ENCODE measurements at regions of chr3 and their contacts with region 1.

Region 1: GRCh38 chr3:12663936-12664908 is at the start of gene RAF1:
- DNase-seq: peak; percentile 96 to 99 (median 97)
- ATAC-seq: peak; percentile 92
- H3K4me3 ChIP-seq: peak within 1 kb of the TSS; percentile 83
- H3K4me3 Mint-ChIP-seq: peak within 1 kb of the TSS; percentile 100
- H3K27ac ChIP-seq: peak within 1 kb of the TSS; percentile 94 to 99
- H3K27ac Mint-ChIP-seq: peak within 1 kb of the TSS; percentile 94
- H3K4me1 ChIP-seq: peaks cover 32% of the 10 kb centered on the region
- H3K4me1 Mint-ChIP-seq: peaks cover 44% of the 10 kb centered on the region
- H3K27me3 ChIP-seq: no peaks in the 10 kb centered on the region
- H3K27me3 Mint-ChIP-seq: no peaks in the 10 kb centered on the region
- CTCF ChIP-seq: no peak
- total RNA-seq, gene RAF1: 127 to 139 TPM

Region 2: DNA sequence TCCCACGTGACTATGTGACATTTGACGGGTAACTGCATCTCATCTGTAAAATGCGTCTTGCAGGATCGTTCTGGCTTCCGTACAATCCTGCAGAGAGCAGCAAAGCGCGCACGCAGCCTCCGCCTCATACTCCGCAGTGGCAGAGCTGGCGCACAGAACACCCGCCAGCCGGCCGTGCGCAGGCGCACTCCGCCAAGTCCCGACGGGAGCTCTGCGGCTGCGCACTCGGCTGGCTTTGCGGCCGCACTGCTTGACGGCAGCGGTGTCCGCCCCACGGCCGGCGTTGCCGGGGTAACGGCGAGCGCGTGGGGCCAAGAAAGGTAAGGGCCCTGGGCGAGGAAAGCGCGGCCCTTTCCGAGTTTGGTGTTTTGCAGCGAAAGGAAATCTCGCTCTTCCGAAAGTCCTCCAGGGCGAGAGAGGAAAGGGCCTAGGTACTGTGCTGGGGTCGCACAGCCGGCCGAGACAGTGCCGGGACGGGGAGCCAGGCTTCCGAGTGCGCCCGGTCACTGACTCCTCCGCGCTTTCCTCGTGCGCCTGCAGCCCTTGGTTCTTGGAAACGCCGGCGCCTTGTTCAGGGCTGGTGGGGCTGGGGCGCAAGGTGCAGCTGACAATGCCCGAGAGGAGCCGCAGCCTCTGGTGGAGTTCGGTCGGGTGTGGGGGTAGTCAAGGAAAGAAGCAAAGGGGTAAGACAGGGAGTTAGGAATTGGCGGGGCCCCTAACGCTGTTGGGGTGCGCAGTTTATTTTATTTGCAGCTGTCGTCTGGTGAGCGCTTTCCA is 179.8 kb before region 1 on chr3 and contains the start of gene TSEN2:
- CTCF ChIA-PET with region 1: interaction called, 3 read pairs
- POLR2A ChIA-PET with region 1: interaction called, 22 read pairs
- intact Hi-C with region 1: loop called in 1 of 2 experiments (anchors 5 kb)
- DNase-seq: peak; percentile 92 to 99 (median 96)
- ATAC-seq: peak; percentile 96
- H3K4me3 ChIP-seq: peak within 1 kb of the TSS; percentile 87
- H3K4me3 Mint-ChIP-seq: peak within 1 kb of the TSS; percentile 97
- H3K27ac ChIP-seq: peak within 1 kb of the TSS; percentile 72 to 81
- H3K27ac Mint-ChIP-seq: peak within 1 kb of the TSS; percentile 97
- H3K4me1 ChIP-seq: peaks cover 29% of the 10 kb centered on the region
- H3K4me1 Mint-ChIP-seq: peaks cover 52% of the 10 kb centered on the region
- H3K27me3 ChIP-seq: no peaks in the 10 kb centered on the region
- H3K27me3 Mint-ChIP-seq: no peaks in the 10 kb centered on the region
- CTCF ChIP-seq: no peak
- total RNA-seq, gene TSEN2: 8.0 to 8.2 TPM

Region 3: GRCh38 chr3:12556671-12557472 is 107.3 kb before region 1 on chr3 and contains the start of gene MKRN2:
- CTCF ChIA-PET with region 1: no interaction called
- POLR2A ChIA-PET with region 1: interaction called, 19 read pairs
- intact Hi-C with region 1: loop called (anchors 1 to 5 kb)
- DNase-seq: peak; percentile 68 to 93 (median 82)
- ATAC-seq: peak; percentile 93
- H3K4me3 ChIP-seq: peak within 1 kb of the TSS; percentile 85
- H3K4me3 Mint-ChIP-seq: peak within 1 kb of the TSS; percentile 93
- H3K27ac ChIP-seq: peak within 1 kb of the TSS; percentile 85 to 91
- H3K27ac Mint-ChIP-seq: peak within 1 kb of the TSS; percentile 81
- H3K4me1 ChIP-seq: peaks cover 44% of the 10 kb centered on the region
- H3K4me1 Mint-ChIP-seq: peaks cover 69% of the 10 kb centered on the region
- H3K27me3 ChIP-seq: peaks cover 17 to 27% of the 10 kb centered on the region in 2 experiments
- H3K27me3 Mint-ChIP-seq: peaks cover 38% of the 10 kb centered on the region
- CTCF ChIP-seq: no peak
- total RNA-seq, gene MKRN2: 19.0 to 20.3 TPM

Region 4: GRCh38 chr3:12629560-12629959 is 34.7 kb before region 1 on chr3:
- CTCF ChIA-PET with region 1: no interaction called
- POLR2A ChIA-PET with region 1: interaction called, 4 read pairs
- intact Hi-C with region 1: loop called in 1 of 2 experiments (anchors 5 kb)
- DNase-seq: no peak
- ATAC-seq: no peak
- H3K4me3 ChIP-seq: no peak overlapping the region
- H3K4me3 Mint-ChIP-seq: no peak overlapping the region
- H3K27ac ChIP-seq: no peak overlapping the region
- H3K27ac Mint-ChIP-seq: peak overlapping the region; percentile 31
- H3K4me1 ChIP-seq: peaks cover 42% of the 10 kb centered on the region
- H3K4me1 Mint-ChIP-seq: peaks cover 76% of the 10 kb centered on the region
- H3K27me3 ChIP-seq: no peaks in the 10 kb centered on the region
- H3K27me3 Mint-ChIP-seq: no peaks in the 10 kb centered on the region
- CTCF ChIP-seq: no peak

Region 5: DNA sequence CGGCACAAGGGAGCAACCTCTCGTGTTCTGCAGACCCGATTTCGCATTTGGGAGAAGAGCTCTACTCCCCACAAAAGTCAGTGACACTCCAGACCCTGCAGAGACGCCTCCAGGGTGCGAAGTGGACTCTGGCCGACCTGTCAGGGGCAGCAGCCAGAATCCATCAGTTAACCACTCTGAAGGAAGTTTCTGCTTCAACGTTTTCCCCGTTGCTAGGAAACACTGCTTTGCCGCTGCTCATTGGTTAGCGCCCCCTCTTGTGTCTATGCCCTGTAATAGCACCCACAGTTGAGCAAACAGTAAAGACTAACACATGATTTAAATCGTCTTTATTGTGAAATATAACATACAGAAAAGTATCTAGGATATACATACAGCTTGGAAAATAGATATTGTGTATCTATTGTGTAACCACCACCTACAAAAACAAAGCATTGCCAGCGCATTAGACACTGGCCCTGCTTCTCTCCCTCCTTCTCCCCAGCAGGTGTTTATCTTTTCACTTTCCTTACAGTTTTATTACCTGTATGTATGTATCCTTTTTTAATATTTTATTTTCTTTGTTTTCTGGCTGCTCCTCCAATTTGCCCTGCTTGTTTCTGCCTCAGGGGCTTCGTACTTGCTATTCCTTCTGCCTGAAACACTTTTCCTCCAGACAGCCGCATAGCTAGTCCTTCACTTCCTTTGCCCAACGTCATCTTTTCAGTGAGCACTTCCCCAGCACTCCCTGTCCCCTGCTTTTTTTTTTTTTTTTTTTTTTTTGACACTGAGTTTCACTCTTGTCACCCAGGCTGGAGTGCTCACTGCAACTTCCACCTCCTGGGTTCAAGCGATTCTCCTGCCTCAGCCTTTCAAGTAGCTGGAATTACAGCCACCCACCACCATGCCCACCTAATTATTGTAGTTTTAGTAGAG is 56.0 kb after region 1 on chr3:
- CTCF ChIA-PET with region 1: interaction called, 3 read pairs
- POLR2A ChIA-PET with region 1: interaction called, 4 read pairs
- intact Hi-C with region 1: loop called in 1 of 2 experiments (anchors 1 kb)
- DNase-seq: peak; percentile 52 to 90 (median 64)
- ATAC-seq: peak; percentile 97
- H3K4me3 ChIP-seq: peak overlapping the region; percentile 3
- H3K4me3 Mint-ChIP-seq: peak overlapping the region; percentile 48
- H3K27ac ChIP-seq: no peak overlapping the region
- H3K27ac Mint-ChIP-seq: no peak overlapping the region
- H3K4me1 ChIP-seq: peaks cover 5% of the 10 kb centered on the region
- H3K4me1 Mint-ChIP-seq: peaks cover 11% of the 10 kb centered on the region
- H3K27me3 ChIP-seq: no peaks in the 10 kb centered on the region
- H3K27me3 Mint-ChIP-seq: peaks cover 5% of the 10 kb centered on the region
- CTCF ChIP-seq: peak; percentile 96

Region 6: DNA sequence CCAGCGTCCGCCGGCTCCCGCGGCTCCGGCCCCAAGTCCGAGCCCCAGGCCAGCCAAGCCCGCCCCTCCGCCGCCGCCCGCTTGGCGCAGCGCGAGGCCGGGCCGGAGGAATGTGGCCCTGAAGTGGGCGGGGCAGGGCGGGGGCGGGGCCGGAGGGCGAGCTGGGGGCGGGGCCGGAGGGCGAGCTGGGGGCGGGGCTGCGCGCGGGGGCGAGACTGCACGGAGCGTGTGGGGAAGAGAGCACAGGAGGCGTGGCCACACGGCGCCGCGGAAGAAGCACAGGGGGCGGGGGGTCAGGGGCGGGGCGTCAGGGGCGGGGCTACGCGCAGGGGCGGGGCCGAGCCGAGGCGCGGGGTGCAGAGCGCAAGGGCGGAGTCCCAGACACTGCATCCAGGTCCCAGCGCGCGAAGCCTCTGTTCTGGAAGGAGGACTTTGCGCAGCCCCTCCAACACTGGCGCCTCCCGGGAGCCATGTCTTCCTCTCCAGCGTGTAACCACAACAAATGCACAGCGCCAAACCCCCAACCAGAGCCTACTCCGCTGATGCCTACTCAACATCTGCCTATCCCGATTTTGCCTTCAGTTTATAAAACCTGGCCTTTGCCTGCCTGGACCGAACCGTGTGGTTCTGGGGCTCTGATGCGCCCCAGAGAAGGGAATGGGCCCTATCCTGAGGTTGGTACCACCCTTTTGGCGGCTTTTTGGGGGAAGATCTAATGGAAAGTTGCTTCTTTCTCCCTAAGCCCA is 303.6 kb after region 1 on chr3:
- CTCF ChIA-PET with region 1: no interaction called
- POLR2A ChIA-PET with region 1: no interaction called
- intact Hi-C with region 1: loop called in 1 of 2 experiments (anchors 10 kb)
- DNase-seq: peak; percentile 82 to 97 (median 88)
- ATAC-seq: peak; percentile 95
- H3K4me3 ChIP-seq: peak overlapping the region; percentile 47
- H3K4me3 Mint-ChIP-seq: peak overlapping the region; percentile 80
- H3K27ac ChIP-seq: no peak overlapping the region
- H3K27ac Mint-ChIP-seq: peak overlapping the region; percentile 67
- H3K4me1 ChIP-seq: peaks cover 65% of the 10 kb centered on the region
- H3K4me1 Mint-ChIP-seq: peaks cover 78% of the 10 kb centered on the region
- H3K27me3 ChIP-seq: no peaks in the 10 kb centered on the region
- H3K27me3 Mint-ChIP-seq: no peaks in the 10 kb centered on the region
- CTCF ChIP-seq: no peak

Measured in CD4-positive, alpha-beta T cell (primary cell).